ENCODE measurements at regions of chr9 and their contacts with region 1.

Region 1: DNA sequence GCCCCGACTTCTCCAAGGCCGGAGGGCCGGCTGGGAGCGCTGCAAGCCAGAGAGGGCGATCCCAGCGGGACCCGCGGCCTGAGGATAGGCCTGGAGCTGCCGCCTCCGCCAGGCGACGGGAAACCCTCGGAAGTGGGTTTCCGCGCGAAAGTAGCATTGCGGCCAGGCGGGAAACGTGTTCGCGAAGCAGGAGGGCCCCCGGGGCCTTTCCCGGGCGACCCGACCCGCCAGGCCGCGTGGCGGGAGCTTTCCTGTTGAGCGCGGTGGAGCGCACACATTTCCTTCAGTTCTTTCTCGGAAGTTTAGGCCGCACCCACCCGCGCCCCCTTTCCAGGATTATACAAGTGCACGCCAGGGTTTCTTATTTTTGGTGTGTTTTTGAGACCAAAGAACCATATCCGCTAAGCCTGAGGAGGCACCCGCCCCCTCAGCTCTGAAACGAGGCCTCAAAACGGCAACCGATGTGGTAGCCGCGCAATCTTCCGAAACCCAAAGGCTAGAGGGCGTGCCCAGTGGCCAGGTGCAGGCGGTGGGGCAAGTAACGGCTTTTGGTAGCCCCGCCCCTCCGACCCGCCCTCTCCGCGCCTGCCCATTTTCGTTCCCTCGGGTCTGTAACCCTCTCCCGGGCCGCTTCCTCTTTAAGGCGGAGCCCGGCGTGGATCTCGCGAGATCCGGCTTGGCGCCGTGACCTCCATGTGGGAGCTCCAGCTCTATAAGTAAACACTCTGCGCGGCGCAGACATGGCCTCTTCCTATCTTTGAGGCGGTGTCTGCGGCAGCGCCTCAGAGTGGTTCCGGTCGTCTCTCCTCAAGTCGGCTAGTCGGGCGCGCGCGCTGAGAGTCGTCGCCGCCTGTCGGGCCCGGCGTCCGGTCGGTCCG is at the start of gene UHRF2:
- DNase-seq: peak; percentile 92 to 100 (median 98)
- ATAC-seq: peak; percentile 86 to 91
- H3K4me3 Mint-ChIP-seq: peak within 1 kb of the TSS; percentile 84 to 95 (median 90)
- H3K27ac Mint-ChIP-seq: peak within 1 kb of the TSS; percentile 80 to 97 (median 96)
- H3K4me1 Mint-ChIP-seq: peaks cover 21 to 54% (median 35%) of the 10 kb centered on the region in 4 donors
- H3K27me3 Mint-ChIP-seq: no peaks in the 10 kb centered on the region
- polyA plus RNA-seq, gene UHRF2: 9.4 to 13.1 (median 10.6) TPM

Region 2: GRCh38 chr9:6008169-6008979 is 404.4 kb before region 1 on chr9:
- POLR2A ChIA-PET with region 1: interaction called, 18 read pairs
- DNase-seq: peak; percentile 80 to 99 (median 94)
- ATAC-seq: peak; percentile 71 to 72
- H3K4me3 Mint-ChIP-seq: peak overlapping the region; percentile 75 to 95 (median 85)
- H3K27ac Mint-ChIP-seq: peak overlapping the region; percentile 85 to 98 (median 92)
- H3K4me1 Mint-ChIP-seq: peaks cover 19 to 66% (median 51%) of the 10 kb centered on the region in 4 donors
- H3K27me3 Mint-ChIP-seq: no peaks in the 10 kb centered on the region

Region 3: GRCh38 chr9:6471231-6471850 is 58.6 kb after region 1 on chr9:
- POLR2A ChIA-PET with region 1: interaction called, 10 read pairs
- DNase-seq: no peak
- ATAC-seq: no peak
- H3K4me3 Mint-ChIP-seq: no peak overlapping the region
- H3K27ac Mint-ChIP-seq: peak overlapping the region in 5 of 10 donors; percentile 7 to 42 (median 15)
- H3K4me1 Mint-ChIP-seq: peaks cover 0 to 26% (median 18%) of the 10 kb centered on the region in 4 donors
- H3K27me3 Mint-ChIP-seq: no peaks in the 10 kb centered on the region

Region 4: GRCh38 chr9:6703898-6704639 is 291.3 kb after region 1 on chr9:
- POLR2A ChIA-PET with region 1: interaction called, 25 read pairs
- DNase-seq: peak; percentile 64 to 94 (median 80)
- ATAC-seq: peak; percentile 88 to 93
- H3K4me3 Mint-ChIP-seq: peak overlapping the region; percentile 90 to 97 (median 93)
- H3K27ac Mint-ChIP-seq: peak overlapping the region; percentile 93 to 99 (median 96)
- H3K4me1 Mint-ChIP-seq: peaks cover 6 to 21% (median 12%) of the 10 kb centered on the region in 4 donors
- H3K27me3 Mint-ChIP-seq: no peaks in the 10 kb centered on the region

Region 5: DNA sequence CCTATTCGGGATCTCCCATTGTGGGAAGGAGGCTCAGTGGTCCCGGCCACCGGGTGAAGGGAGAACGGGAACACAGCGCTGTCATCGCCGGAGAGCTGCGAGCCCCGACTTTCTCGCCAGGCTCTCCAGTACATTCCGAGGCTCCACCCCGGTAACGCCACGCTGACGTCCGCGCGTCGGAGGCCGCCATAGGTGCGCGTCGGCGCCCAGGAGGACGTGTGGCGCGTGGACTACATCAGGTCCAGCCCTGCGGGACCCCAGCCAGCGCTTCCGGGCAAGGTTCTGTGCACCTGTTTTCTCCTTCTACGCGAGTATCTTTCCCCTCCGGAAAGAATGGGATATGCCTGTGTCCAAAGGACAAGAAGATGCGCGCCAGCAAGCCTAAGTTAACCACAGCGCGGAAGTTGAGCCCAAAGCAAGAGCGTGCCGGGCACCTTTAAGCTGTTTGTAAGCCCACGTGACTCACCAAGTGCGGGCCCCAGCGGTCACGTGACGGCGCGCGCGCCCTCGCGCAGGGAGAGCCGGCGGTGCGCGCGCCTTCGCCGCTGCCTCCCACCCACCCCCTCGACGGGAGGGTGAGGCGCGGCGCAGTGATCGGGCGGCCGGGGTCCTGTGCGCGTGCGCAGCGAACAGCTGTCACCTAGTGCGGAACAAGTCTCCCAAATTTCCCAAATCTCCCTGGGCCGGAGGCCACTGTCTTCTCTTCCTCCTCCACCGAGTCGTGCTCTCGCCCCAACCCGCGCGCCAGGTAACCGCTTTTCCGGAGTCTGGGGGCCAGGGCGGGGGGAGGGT is 344.9 kb after region 1 on chr9 and contains the start of gene KDM4C:
- POLR2A ChIA-PET with region 1: interaction called, 88 read pairs
- DNase-seq: peak; percentile 93 to 98 (median 96)
- ATAC-seq: peak; percentile 77 to 78
- H3K4me3 Mint-ChIP-seq: peak within 1 kb of the TSS; percentile 90 to 99 (median 96)
- H3K27ac Mint-ChIP-seq: peak within 1 kb of the TSS; percentile 99 to 100 (median 99)
- H3K4me1 Mint-ChIP-seq: peaks cover 9 to 35% (median 30%) of the 10 kb centered on the region in 4 donors
- H3K27me3 Mint-ChIP-seq: peaks cover 0 to 2% (median 0%) of the 10 kb centered on the region in 5 donors
- polyA plus RNA-seq, gene KDM4C: 27.5 to 27.8 (median 27.6) TPM